B cell (primary cell): ENCODE measurements at regions of chr18 and their contacts with region 1.

Region 1: GRCh38 chr18:58768293-58768974 is 96.2 kb upstream of the ZNF532 start:
- DNase-seq: peak; percentile 85
- ATAC-seq: peak; percentile 83
- H3K4me3 ChIP-seq: peak overlapping the region in 3 of 5 experiments; percentile 12 to 44 (median 35)
- H3K4me3 Mint-ChIP-seq: peak overlapping the region; percentile 70
- H3K27ac ChIP-seq: no peak overlapping the region
- H3K27ac Mint-ChIP-seq: no peak overlapping the region
- H3K4me1 ChIP-seq: peaks cover 3 to 13% of the 10 kb centered on the region in 2 donors
- H3K4me1 Mint-ChIP-seq: peaks cover 11% of the 10 kb centered on the region
- H3K27me3 ChIP-seq: peaks cover 0 to 35% (median 3%) of the 10 kb centered on the region in 4 experiments
- H3K27me3 Mint-ChIP-seq: peaks cover 25% of the 10 kb centered on the region
- CTCF ChIP-seq: peak; percentile 66

Region 2: DNA sequence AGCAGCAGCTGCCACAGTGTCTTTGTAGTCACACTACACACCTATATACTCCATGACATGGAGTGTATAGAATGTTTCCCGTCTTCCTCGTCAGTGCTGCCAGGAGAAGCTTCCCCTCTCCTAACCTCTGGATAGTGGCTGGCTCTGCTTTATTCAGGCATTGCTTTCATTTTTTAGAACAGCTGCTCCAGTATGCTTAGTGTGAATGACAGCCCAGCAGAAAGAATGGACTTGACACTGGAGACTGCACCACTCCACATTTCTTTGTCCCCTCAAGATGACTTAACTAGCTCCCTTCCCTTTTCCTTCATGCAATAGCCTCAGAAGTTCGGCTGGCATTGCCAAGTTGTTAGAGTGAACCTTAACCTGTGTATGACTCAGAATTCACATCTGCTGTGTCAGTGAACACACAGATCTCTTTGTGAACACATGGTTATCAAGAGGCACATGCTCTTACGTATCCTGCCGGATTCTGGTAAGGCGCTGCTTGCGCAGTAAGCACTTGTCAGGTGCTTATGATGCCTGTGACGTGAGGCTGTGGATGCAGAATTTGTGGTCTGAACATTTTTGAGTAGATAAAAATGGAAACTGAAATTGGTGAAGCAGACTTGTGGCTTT is 650.5 kb before region 1 on chr18:
- CTCF ChIA-PET with region 1: interaction called, 3 read pairs
- POLR2A ChIA-PET with region 1: no interaction called
- intact Hi-C with region 1: loop called (anchors 1 kb)
- DNase-seq: no peak
- ATAC-seq: no peak
- H3K4me3 ChIP-seq: no peak overlapping the region
- H3K4me3 Mint-ChIP-seq: no peak overlapping the region
- H3K27ac ChIP-seq: no peak overlapping the region
- H3K27ac Mint-ChIP-seq: no peak overlapping the region
- H3K4me1 ChIP-seq: peaks cover 5 to 6% of the 10 kb centered on the region in 2 donors
- H3K4me1 Mint-ChIP-seq: peaks cover 7% of the 10 kb centered on the region
- H3K27me3 ChIP-seq: peaks cover 0 to 3% (median 0%) of the 10 kb centered on the region in 4 experiments
- H3K27me3 Mint-ChIP-seq: no peaks in the 10 kb centered on the region
- CTCF ChIP-seq: no peak

Region 3: DNA sequence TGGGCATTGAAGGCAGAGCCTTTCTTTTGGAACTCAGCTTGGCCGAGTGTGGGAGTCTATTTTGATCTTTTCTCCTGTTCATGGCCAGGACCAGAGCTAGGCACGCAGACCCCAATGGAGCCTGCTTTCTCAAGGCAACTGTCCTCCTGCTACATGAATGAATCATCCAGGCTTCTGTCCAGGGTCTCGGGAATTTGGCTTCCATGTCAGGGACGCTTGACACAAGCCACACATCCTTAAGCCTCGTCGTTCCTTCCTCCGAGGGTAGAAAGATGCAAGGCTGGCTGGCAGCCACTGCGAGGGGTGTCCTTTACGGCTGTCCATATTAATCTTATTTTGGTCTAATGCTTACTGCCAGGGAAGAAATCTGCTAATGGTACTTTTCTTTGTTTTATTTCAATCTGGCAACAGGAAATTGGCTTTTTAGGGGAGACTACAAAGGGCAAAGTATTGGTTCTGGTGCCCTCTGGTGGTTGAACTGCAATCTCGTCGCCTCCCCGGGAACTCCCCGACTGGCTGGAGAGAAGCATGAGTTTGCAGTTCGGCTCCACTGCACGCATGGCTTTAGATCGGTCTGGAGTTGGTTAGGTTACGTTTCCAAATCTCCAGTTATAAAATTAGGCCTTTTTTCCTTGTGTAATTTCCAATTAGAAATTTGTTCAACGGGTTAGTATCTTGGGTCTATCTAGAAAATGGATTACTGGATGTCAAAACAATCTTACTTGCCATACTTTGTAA is 274.7 kb before region 1 on chr18:
- CTCF ChIA-PET with region 1: interaction called, 26 read pairs
- POLR2A ChIA-PET with region 1: no interaction called
- intact Hi-C with region 1: loop called (anchors 1 kb)
- DNase-seq: peak; percentile 74
- ATAC-seq: peak; percentile 89
- H3K4me3 ChIP-seq: no peak overlapping the region
- H3K4me3 Mint-ChIP-seq: no peak overlapping the region
- H3K27ac ChIP-seq: no peak overlapping the region
- H3K27ac Mint-ChIP-seq: no peak overlapping the region
- H3K4me1 ChIP-seq: peaks cover 0 to 5% of the 10 kb centered on the region in 2 donors
- H3K4me1 Mint-ChIP-seq: peaks cover 7% of the 10 kb centered on the region
- H3K27me3 ChIP-seq: peaks cover 0 to 22% (median 10%) of the 10 kb centered on the region in 4 experiments
- H3K27me3 Mint-ChIP-seq: peaks cover 47% of the 10 kb centered on the region
- CTCF ChIP-seq: peak; percentile 88

Region 4: DNA sequence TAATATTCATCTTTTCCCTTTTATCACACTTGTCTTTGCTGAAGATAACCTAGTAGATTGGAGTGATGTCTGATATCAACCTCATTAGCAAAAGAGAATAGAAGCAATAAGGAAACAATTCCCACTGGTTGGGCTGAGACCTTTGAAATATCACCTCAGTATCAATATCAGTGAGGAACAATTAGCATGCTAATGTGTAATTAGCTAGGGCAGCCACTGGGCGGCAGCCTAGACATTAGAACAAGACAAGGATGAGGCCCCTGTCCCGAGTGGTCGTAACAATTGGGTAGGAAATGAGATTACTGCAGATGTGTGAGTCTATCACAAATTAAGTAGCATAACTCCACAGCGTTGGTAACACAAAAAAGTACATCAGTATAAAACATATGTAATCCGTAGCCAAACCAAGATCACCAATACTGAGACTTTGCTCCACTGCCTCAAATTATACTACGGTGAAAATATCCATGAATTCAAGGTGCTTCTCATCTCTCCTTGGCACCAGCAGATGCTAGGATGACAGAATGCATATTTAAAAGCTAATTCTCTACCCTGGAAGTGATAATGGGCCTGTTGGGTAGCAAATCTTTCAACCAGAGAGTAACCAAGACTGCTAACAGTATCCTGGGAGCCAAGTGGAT is 238.6 kb before region 1 on chr18:
- CTCF ChIA-PET with region 1: interaction called, 337 read pairs
- POLR2A ChIA-PET with region 1: interaction called, 4 read pairs
- intact Hi-C with region 1: loop called (anchors 1 kb)
- DNase-seq: peak; percentile 82
- ATAC-seq: peak; percentile 78
- H3K4me3 ChIP-seq: no peak overlapping the region
- H3K4me3 Mint-ChIP-seq: no peak overlapping the region
- H3K27ac ChIP-seq: no peak overlapping the region
- H3K27ac Mint-ChIP-seq: no peak overlapping the region
- H3K4me1 ChIP-seq: peaks cover 24 to 30% of the 10 kb centered on the region in 2 donors
- H3K4me1 Mint-ChIP-seq: peaks cover 38% of the 10 kb centered on the region
- H3K27me3 ChIP-seq: no peaks in the 10 kb centered on the region
- H3K27me3 Mint-ChIP-seq: no peaks in the 10 kb centered on the region
- CTCF ChIP-seq: peak; percentile 90

Region 5: DNA sequence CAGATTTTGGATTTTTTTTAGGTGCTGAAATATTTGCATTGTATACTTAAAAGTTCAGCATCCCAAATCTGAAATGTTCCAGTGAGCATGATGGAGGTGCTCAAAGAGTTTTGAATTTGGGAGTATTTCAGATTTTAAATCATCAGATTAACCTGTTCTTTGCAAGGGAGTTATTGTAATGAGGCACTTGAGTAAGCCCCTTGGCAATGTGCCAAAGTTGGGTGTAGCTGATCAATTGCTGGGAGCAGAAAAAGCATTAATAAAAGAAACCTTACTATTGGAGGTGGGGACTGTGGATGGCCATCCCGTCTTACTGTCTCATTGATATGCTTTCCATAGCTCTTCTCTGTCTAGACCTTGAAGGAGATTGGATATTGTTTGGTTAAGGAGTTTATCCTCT is 68.9 kb before region 1 on chr18:
- CTCF ChIA-PET with region 1: interaction called, 11 read pairs
- POLR2A ChIA-PET with region 1: no interaction called
- intact Hi-C with region 1: no loop called
- DNase-seq: no peak
- ATAC-seq: no peak
- H3K4me3 ChIP-seq: no peak overlapping the region
- H3K4me3 Mint-ChIP-seq: no peak overlapping the region
- H3K27ac ChIP-seq: no peak overlapping the region
- H3K27ac Mint-ChIP-seq: no peak overlapping the region
- H3K4me1 ChIP-seq: peaks cover 0 to 2% of the 10 kb centered on the region in 2 donors
- H3K4me1 Mint-ChIP-seq: peaks cover 20% of the 10 kb centered on the region
- H3K27me3 ChIP-seq: no peaks in the 10 kb centered on the region
- H3K27me3 Mint-ChIP-seq: no peaks in the 10 kb centered on the region
- CTCF ChIP-seq: no peak

Region 6: GRCh38 chr18:59056706-59057492 is 288.5 kb after region 1 on chr18:
- CTCF ChIA-PET with region 1: interaction called, 50 read pairs
- POLR2A ChIA-PET with region 1: no interaction called
- intact Hi-C with region 1: no loop called
- DNase-seq: peak; percentile 84
- ATAC-seq: peak; percentile 80
- H3K4me3 ChIP-seq: no peak overlapping the region
- H3K4me3 Mint-ChIP-seq: no peak overlapping the region
- H3K27ac ChIP-seq: no peak overlapping the region
- H3K27ac Mint-ChIP-seq: peak overlapping the region; percentile 23
- H3K4me1 ChIP-seq: peaks cover 5 to 8% of the 10 kb centered on the region in 2 donors
- H3K4me1 Mint-ChIP-seq: peaks cover 13% of the 10 kb centered on the region
- H3K27me3 ChIP-seq: no peaks in the 10 kb centered on the region
- H3K27me3 Mint-ChIP-seq: peaks cover 6% of the 10 kb centered on the region
- CTCF ChIP-seq: peak; percentile 91